Activated CD8-positive, alpha-beta T cell treated with anti-CD3 and anti-CD28 coated beads, Interleukin-2, amount 10 ng/mL, durations not matched to agents 7 days and 5 days (primary cell): ENCODE measurements at regions of chr2 and their contacts with region 1.

Region 1: GRCh38 chr2:96856776-96857673 is 791 bp downstream of the ANKRD39 start:
- DNase-seq: peak; percentile 56
- ATAC-seq: peak; percentile 4
- H3K4me3 Mint-ChIP-seq: peak overlapping the region; percentile 88
- H3K27ac Mint-ChIP-seq: peak overlapping the region; percentile 82
- H3K4me1 Mint-ChIP-seq: peaks cover 45% of the 10 kb centered on the region
- H3K27me3 Mint-ChIP-seq: no peaks in the 10 kb centered on the region

Region 2: GRCh38 chr2:96594691-96595152 is 262.3 kb before region 1 on chr2:
- CTCF ChIA-PET with region 1: no interaction called
- POLR2A ChIA-PET with region 1: no interaction called
- DNase-seq: peak; percentile 65
- ATAC-seq: peak; percentile 93
- H3K4me3 Mint-ChIP-seq: peak overlapping the region; percentile 50
- H3K27ac Mint-ChIP-seq: peak overlapping the region; percentile 89
- H3K4me1 Mint-ChIP-seq: peaks cover 59% of the 10 kb centered on the region
- H3K27me3 Mint-ChIP-seq: no peaks in the 10 kb centered on the region

Region 3: DNA sequence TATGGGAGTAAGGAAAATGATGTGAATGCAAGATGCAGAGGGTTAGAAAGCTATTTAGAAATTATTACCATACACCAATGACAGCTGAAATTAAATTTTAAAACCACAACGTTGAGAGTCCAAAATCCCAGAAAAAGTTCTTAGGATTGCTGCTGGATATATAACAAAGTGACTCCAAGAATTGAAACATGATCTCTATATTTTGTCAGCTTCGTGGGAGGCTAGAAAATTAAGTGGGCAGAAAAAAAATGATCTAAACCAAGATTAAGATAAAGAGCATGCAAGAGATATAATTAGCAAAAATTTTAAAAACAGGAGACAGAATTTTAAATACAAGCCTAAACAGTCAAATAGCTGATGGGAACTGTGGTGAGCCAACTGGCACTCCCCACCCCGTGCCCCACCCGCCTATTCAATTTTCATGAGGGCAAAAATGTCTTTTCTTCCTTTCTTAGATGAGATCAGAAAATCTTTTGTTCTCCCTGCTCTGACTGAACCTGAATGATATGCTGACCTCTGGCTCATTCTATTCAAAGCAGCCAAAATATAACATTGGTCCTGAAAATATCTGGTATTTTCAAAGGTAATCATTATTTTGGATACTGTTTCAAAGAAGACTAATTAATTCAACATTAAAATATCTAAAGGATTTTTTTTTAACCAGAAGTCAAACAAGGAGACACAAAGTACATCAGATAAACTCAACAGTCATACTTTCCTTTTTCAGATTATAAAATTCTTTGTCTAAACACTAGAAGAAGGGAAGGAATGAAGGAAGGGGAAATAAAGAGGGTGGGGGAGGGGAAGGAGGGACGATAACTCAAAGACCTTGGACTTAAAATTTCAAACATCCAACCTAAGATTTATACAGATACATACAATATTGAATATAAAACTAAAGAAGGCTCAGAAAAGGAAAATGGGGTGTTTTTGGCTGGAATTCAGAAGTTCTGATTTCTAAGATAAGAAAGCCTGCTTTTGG is 231.2 kb before region 1 on chr2:
- CTCF ChIA-PET with region 1: no interaction called
- POLR2A ChIA-PET with region 1: no interaction called
- DNase-seq: no peak
- ATAC-seq: no peak
- H3K4me3 Mint-ChIP-seq: no peak overlapping the region
- H3K27ac Mint-ChIP-seq: no peak overlapping the region
- H3K4me1 Mint-ChIP-seq: peaks cover 11% of the 10 kb centered on the region
- H3K27me3 Mint-ChIP-seq: no peaks in the 10 kb centered on the region

Region 4: GRCh38 chr2:96702098-96702785 is 154.8 kb before region 1 on chr2:
- CTCF ChIA-PET with region 1: no interaction called
- POLR2A ChIA-PET with region 1: no interaction called
- DNase-seq: no peak
- ATAC-seq: no peak
- H3K4me3 Mint-ChIP-seq: no peak overlapping the region
- H3K27ac Mint-ChIP-seq: no peak overlapping the region
- H3K4me1 Mint-ChIP-seq: no peaks in the 10 kb centered on the region
- H3K27me3 Mint-ChIP-seq: no peaks in the 10 kb centered on the region

Region 5: DNA sequence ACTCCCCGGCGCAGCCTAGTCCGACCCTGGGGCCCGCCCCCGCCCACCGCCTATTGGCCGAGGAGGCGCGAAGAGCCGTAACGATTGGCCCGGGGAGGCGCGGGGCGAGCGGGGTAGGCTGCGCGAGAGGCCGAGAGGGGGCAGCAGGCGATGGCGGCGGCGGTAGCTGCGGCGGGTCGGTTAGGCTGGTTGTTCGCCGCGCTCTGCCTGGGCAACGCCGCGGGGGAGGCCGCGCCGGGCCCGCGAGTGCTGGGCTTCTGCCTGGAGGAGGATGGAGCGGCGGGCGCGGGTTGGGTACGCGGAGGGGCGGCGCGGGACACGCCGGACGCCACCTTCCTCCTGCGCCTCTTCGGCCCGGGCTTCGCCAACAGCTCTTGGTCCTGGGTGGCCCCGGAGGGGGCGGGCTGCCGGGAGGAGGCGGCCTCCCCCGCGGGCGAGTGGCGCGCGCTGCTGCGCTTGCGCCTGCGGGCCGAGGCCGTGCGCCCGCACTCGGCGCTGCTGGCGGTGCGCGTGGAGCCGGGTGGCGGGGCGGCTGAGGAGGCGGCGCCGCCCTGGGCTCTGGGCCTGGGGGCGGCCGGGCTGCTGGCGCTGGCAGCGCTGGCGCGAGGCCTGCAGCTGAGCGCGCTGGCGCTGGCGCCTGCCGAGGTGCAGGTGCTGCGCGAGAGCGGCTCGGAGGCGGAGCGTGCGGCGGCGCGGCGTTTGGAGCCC is 40.7 kb before region 1 on chr2 and contains the start of gene CNNM3:
- CTCF ChIA-PET with region 1: interaction called, 15 read pairs
- POLR2A ChIA-PET with region 1: interaction called, 9 read pairs
- DNase-seq: peak; percentile 96
- ATAC-seq: peak; percentile 95
- H3K4me3 Mint-ChIP-seq: peak within 1 kb of the TSS; percentile 89
- H3K27ac Mint-ChIP-seq: peak within 1 kb of the TSS; percentile 71
- H3K4me1 Mint-ChIP-seq: peaks cover 53% of the 10 kb centered on the region
- H3K27me3 Mint-ChIP-seq: no peaks in the 10 kb centered on the region
- total RNA-seq, gene CNNM3: 28.1 to 29.9 TPM

Region 6: GRCh38 chr2:96868555-96869280 is 11.7 kb after region 1 on chr2:
- CTCF ChIA-PET with region 1: interaction called, 39 read pairs
- POLR2A ChIA-PET with region 1: interaction called, 18 read pairs
- DNase-seq: peak; percentile 80
- ATAC-seq: peak; percentile 47
- H3K4me3 Mint-ChIP-seq: peak overlapping the region; percentile 78
- H3K27ac Mint-ChIP-seq: peak overlapping the region; percentile 86
- H3K4me1 Mint-ChIP-seq: peaks cover 40% of the 10 kb centered on the region
- H3K27me3 Mint-ChIP-seq: peaks cover 4% of the 10 kb centered on the region

Region 7: DNA sequence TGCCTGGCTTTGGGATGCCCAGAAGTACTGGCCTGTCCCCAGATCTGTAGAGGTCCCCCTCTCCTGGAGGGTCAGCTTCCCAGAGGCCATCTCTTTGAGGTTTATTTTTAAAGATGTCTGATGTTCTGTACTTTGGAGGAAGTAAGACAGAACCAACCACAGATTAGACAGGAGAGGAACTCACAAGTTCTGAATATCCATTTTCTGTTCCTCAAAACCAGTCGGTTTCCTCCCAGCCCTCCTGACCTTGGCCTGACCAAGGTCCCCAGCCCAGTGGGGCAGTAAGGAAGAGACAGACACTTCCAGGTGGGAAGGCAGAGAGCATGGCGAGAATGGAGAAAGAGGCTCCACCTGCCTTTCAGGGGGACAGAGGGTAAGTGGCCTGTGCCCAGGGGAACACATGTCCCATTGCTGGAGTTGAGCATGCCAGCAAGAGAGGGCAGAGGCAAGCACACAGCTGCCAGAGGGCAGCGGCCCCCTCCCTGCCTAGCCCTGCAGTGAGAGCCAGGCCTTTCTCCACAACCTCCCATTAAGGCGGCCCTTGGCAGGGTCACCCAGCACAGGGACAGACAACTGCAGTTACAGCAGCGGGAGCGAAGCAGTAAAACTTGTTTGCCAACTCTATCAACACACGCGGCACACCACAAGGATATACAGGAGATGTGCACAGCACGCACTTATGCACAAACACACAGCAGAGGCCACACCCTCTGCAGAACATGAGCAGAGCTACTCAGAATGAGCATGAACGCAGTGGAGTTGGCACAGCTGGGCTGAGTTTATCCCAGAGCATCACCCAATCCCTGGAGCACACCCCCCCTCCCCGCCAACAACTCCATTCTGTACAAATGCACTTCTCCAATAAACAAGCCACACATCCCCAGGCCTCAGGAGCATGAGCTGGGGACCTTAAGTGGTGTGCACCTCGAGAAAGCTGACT is 31.3 kb after region 1 on chr2:
- CTCF ChIA-PET with region 1: interaction called, 12 read pairs
- POLR2A ChIA-PET with region 1: interaction called, 4 read pairs
- DNase-seq: no peak
- ATAC-seq: no peak
- H3K4me3 Mint-ChIP-seq: no peak overlapping the region
- H3K27ac Mint-ChIP-seq: no peak overlapping the region
- H3K4me1 Mint-ChIP-seq: peaks cover 20% of the 10 kb centered on the region
- H3K27me3 Mint-ChIP-seq: no peaks in the 10 kb centered on the region

Region 8: DNA sequence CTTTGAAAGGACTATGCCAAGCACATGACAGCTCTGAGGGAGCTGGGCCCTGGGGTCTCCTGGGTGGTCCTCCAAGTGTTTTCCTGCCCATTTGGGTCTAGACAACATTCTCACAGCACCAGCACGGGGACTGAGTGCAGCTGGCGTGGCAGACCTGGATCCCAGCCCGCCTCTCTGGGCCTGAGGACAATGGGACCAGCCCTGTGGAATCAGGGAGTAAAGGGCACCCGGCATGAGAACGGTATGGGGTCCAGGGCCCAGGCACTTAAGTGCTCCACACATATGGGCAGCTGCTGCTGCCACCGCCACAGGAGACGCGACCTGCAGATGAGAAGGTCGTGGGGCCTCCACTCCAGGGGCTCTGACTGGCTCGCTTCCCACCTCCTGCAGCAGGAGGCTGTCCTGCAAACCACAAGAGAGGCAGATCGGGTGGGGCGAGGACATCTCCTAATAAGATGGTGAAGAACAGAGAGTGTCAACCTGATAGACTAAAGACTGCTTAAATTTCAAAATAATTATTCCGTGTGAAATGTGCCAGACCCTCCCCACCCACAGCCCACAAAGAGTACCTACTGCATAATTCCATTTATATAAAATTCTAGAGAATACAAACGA is 83.1 kb after region 1 on chr2:
- CTCF ChIA-PET with region 1: interaction called, 253 read pairs
- POLR2A ChIA-PET with region 1: no interaction called
- DNase-seq: no peak
- ATAC-seq: no peak
- H3K4me3 Mint-ChIP-seq: no peak overlapping the region
- H3K27ac Mint-ChIP-seq: peak overlapping the region; percentile 20
- H3K4me1 Mint-ChIP-seq: peaks cover 46% of the 10 kb centered on the region
- H3K27me3 Mint-ChIP-seq: no peaks in the 10 kb centered on the region

Region 9: GRCh38 chr2:96960153-96960961 is 103.3 kb after region 1 on chr2:
- CTCF ChIA-PET with region 1: interaction called, 253 read pairs
- POLR2A ChIA-PET with region 1: interaction called, 14 read pairs
- DNase-seq: peak; percentile 92
- ATAC-seq: peak; percentile 60
- H3K4me3 Mint-ChIP-seq: peak overlapping the region; percentile 43
- H3K27ac Mint-ChIP-seq: peak overlapping the region; percentile 98
- H3K4me1 Mint-ChIP-seq: peaks cover 59% of the 10 kb centered on the region
- H3K27me3 Mint-ChIP-seq: peaks cover 2% of the 10 kb centered on the region